ENCODE measurements at regions of chr15 and their contacts with region 1.

Region 1: DNA sequence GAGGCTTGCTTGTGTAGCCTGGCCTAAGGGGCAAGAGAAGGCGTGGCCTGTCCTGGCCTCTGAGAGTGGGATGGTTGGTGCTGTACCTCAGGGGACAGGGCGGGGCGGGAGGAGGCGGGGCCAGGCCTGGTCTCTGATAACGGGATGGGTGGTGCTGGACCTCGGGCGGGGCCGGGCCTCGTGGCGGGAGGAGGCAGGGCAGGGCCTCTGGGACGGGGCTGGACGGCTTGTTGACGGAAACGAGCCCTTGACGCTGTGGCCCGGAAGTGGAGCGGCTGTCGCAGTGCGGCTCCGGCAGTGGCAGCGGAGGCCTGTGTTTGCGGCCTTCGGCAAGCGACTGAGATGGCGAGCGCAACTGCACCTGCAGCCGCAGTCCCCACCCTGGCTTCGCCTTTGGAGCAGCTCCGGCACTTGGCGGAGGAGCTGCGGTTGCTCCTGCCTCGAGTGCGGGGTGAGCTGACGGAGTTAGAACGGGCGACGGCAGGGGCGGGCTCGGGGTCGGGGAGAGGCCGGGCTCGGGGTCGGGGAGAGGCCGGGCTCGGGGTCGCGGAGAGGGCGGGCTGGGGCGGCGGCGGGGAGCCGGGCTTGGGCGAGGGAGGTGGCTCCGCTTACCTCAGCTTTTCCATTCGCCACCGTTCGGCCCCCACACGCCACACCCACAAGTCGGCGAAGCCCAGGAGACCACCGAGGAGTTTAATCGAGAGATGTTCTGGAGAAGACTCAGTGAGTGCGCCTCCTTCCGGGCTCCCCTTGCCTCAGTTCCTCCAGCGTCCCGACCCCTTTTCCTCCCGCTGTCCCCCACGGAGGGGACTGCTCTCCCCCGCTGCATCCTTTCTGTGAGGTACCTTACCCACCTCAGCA is at the start of gene CCNDBP1:
- DNase-seq: peak; percentile 81 to 90 (median 86)
- H3K4me3 ChIP-seq: peak within 1 kb of the TSS; percentile 85 to 92
- H3K4me3 Mint-ChIP-seq: peak within 1 kb of the TSS; percentile 94 to 99 (median 96)
- H3K27ac ChIP-seq: peak within 1 kb of the TSS; percentile 73
- H3K27ac Mint-ChIP-seq: peak within 1 kb of the TSS; percentile 92 to 98 (median 96)
- H3K4me1 ChIP-seq: peaks cover 33% of the 10 kb centered on the region
- H3K4me1 Mint-ChIP-seq: peaks cover 21 to 54% (median 35%) of the 10 kb centered on the region in 4 donors
- H3K27me3 ChIP-seq: no peaks in the 10 kb centered on the region
- H3K27me3 Mint-ChIP-seq: no peaks in the 10 kb centered on the region
- total RNA-seq, gene CCNDBP1: 127 to 128 TPM

Region 2: GRCh38 chr15:42704492-42704926 is 480.9 kb before region 1 on chr15:
- CTCF ChIA-PET with region 1: no interaction called
- POLR2A ChIA-PET with region 1: no interaction called
- intact Hi-C with region 1: loop called (anchors 1 kb)
- DNase-seq: peak; percentile 54 to 60 (median 55)
- H3K4me3 ChIP-seq: no peak overlapping the region
- H3K4me3 Mint-ChIP-seq: no peak overlapping the region
- H3K27ac ChIP-seq: no peak overlapping the region
- H3K27ac Mint-ChIP-seq: no peak overlapping the region
- H3K4me1 ChIP-seq: no peaks in the 10 kb centered on the region
- H3K4me1 Mint-ChIP-seq: peaks cover 0 to 5% (median 0%) of the 10 kb centered on the region in 4 donors
- H3K27me3 ChIP-seq: no peaks in the 10 kb centered on the region
- H3K27me3 Mint-ChIP-seq: no peaks in the 10 kb centered on the region

Region 3: GRCh38 chr15:43105778-43106485 is 79.5 kb before region 1 on chr15 and contains the start of gene UBR1:
- CTCF ChIA-PET with region 1: interaction called, 5 read pairs
- POLR2A ChIA-PET with region 1: interaction called, 10 read pairs
- intact Hi-C with region 1: loop called (anchors 1 kb)
- DNase-seq: peak; percentile 88 to 92 (median 90)
- H3K4me3 ChIP-seq: peak within 1 kb of the TSS; percentile 68 to 87
- H3K4me3 Mint-ChIP-seq: peak within 1 kb of the TSS; percentile 87 to 98 (median 94)
- H3K27ac ChIP-seq: peak within 1 kb of the TSS; percentile 93
- H3K27ac Mint-ChIP-seq: peak within 1 kb of the TSS; percentile 98 to 100 (median 99)
- H3K4me1 ChIP-seq: peaks cover 47% of the 10 kb centered on the region
- H3K4me1 Mint-ChIP-seq: peaks cover 35 to 56% (median 47%) of the 10 kb centered on the region in 4 donors
- H3K27me3 ChIP-seq: no peaks in the 10 kb centered on the region
- H3K27me3 Mint-ChIP-seq: peaks cover 0 to 2% of the 10 kb centered on the region in 2 donors
- total RNA-seq, gene UBR1: 48.5 to 50.6 TPM

Region 4: GRCh38 chr15:43204016-43204901 is 18.9 kb after region 1 on chr15:
- CTCF ChIA-PET with region 1: interaction called, 11 read pairs
- POLR2A ChIA-PET with region 1: interaction called, 4 read pairs
- intact Hi-C with region 1: loop called (anchors 1 kb)
- DNase-seq: peak; percentile 24 to 54 (median 34)
- H3K4me3 ChIP-seq: no peak overlapping the region
- H3K4me3 Mint-ChIP-seq: no peak overlapping the region
- H3K27ac ChIP-seq: no peak overlapping the region
- H3K27ac Mint-ChIP-seq: peak overlapping the region in 4 of 7 donors; percentile 1 to 53 (median 18)
- H3K4me1 ChIP-seq: no peaks in the 10 kb centered on the region
- H3K4me1 Mint-ChIP-seq: peaks cover 0 to 6% (median 3%) of the 10 kb centered on the region in 4 donors
- H3K27me3 ChIP-seq: no peaks in the 10 kb centered on the region
- H3K27me3 Mint-ChIP-seq: peaks cover 5 to 7% of the 10 kb centered on the region in 2 donors

Region 5: GRCh38 chr15:43270676-43271306 is 85.4 kb after region 1 on chr15:
- CTCF ChIA-PET with region 1: no interaction called
- POLR2A ChIA-PET with region 1: no interaction called
- intact Hi-C with region 1: no loop called
- DNase-seq: peak in 1 of 5 donors; percentile 4
- H3K4me3 ChIP-seq: no peak overlapping the region
- H3K4me3 Mint-ChIP-seq: no peak overlapping the region
- H3K27ac ChIP-seq: no peak overlapping the region
- H3K27ac Mint-ChIP-seq: peak overlapping the region in 2 of 7 donors; percentile 43 to 61
- H3K4me1 ChIP-seq: peaks cover 7% of the 10 kb centered on the region
- H3K4me1 Mint-ChIP-seq: peaks cover 3 to 16% (median 7%) of the 10 kb centered on the region in 4 donors
- H3K27me3 ChIP-seq: no peaks in the 10 kb centered on the region
- H3K27me3 Mint-ChIP-seq: peaks cover 12 to 15% of the 10 kb centered on the region in 2 donors

Region 6: DNA sequence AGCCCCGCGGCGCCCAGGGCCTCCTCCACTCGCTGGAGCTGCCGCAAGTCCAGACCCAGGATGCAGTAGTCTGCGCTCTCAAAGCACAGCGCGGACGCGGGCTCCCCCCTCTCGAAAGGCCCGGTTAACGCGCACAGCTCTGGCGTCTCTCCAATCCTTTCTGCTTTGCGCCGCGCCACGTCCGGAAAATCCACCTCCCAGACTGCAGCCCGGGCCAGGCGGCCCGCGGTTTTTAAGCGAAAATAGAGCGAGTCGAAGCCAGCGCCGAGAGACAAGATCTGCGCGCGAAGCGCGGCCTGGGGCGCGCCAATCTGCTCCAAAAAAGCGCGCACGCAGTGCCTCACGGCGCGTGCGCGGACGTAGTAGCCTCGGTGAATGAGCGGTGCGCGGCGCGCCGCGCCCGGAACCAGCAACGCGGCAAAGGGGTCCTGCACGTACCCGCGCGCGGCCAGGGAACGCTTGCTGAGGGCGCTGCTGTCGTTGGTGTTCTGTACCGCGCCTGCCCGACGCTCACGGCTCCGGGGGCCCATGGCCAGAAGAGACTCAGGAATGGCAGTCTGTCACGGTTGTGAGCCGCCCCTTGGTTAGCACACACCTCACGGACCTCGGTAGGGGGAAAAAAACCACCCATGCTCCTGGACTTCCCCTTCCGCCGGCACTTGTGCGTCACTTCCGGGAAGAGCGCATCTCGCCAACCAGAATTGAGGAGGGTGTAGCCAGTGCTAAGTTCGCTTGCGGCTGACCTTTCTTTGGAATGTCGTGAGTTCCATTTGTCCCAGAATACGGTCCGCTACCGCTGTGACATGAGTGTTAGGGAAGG is 144.8 kb after region 1 on chr15 and contains the start of gene LCMT2:
- CTCF ChIA-PET with region 1: no interaction called
- POLR2A ChIA-PET with region 1: interaction called, 5 read pairs
- intact Hi-C with region 1: loop called (anchors 1 kb)
- DNase-seq: peak; percentile 91 to 95 (median 94)
- H3K4me3 ChIP-seq: peak within 1 kb of the TSS; percentile 67 to 91
- H3K4me3 Mint-ChIP-seq: peak within 1 kb of the TSS; percentile 94 to 99 (median 96)
- H3K27ac ChIP-seq: peak within 1 kb of the TSS; percentile 90
- H3K27ac Mint-ChIP-seq: peak within 1 kb of the TSS; percentile 98 to 100 (median 99)
- H3K4me1 ChIP-seq: peaks cover 22% of the 10 kb centered on the region
- H3K4me1 Mint-ChIP-seq: peaks cover 16 to 50% (median 31%) of the 10 kb centered on the region in 4 donors
- H3K27me3 ChIP-seq: no peaks in the 10 kb centered on the region
- H3K27me3 Mint-ChIP-seq: peaks cover 0 to 3% of the 10 kb centered on the region in 2 donors
- total RNA-seq, gene LCMT2: 17.0 to 17.8 TPM